ENCODE measurements at regions of chr20 and their contacts with region 1.

Region 1: GRCh38 chr20:53773792-53774401 is 180.3 kb upstream of the ZNF217 start:
- DNase-seq: peak; percentile 97
- H3K4me3 ChIP-seq: no peak overlapping the region
- CTCF ChIP-seq: no peak

Region 2: DNA sequence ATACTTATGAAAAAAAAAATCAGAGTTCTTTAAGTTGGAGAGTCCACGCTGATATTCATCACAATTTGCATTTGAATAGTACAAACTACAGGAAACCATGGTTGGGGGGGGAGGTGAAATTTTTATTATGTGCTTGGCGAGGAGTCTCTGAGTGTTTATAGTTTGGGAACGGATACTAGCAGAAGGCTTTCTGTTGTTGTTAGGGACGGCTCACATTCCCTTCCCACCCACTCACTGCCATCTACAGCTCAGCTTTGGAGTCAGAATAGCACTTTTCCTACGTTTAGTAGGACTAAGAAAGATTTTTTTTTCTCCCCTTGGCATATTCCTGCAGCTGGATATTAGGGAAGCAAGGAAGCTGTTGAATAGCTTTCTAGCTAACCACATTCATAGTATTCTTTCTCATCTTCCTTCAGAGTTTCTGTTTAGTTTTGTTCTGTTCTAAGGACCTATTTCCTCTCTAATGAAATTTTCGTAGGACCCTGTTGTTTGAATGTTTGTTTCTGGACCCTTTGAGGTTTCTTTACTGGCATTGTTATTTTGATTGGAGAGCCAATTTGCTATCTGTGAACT is 54.9 kb after region 1 on chr20:
- CTCF ChIA-PET with region 1: no interaction called
- POLR2A ChIA-PET with region 1: interaction called, 11 read pairs
- DNase-seq: peak; percentile 86
- H3K4me3 ChIP-seq: peak overlapping the region; percentile 50
- CTCF ChIP-seq: peak; percentile 25